Naive thymus-derived CD4-positive, alpha-beta T cell (primary cell): ENCODE measurements at regions of chr19 and their contacts with region 1.

Region 1: DNA sequence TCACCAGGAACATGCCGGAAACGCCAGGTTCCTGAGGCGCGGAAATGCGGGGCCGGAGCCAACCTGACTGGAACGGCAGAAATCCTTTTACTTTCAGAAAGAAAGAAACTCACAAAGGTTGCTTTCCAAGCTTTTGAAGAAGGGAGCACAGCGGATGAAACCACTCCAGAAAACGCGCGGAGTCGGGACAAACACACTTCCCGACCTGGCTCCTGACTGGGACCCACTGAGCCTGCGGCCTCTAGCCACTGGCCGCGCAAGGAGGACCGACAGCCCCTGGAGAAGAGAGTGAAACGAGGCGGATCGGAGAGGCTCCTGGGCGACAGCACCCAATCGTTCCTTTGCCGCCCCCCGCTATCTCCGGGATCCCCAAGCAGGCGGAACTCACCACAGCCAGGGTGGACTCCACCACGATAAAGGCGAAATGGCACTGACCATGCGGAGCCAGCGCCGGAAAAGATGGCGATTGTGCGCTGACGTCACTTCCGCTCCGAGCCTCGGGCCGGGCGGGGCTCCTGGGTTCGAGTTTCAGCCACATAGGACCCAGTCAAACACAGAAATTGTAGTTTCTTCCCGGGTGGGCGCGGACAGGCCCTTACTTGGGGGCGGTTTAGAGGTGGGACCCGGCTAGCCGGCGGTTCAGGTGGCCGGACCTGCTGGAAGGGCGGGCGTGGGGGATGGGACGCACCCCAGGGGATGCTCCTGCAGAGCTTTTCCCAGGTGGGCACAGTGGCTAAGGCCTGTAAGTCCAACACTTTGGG is at the start of gene ZNF121:
- DNase-seq: peak; percentile 61 to 82 (median 74)
- ATAC-seq: peak; percentile 87
- H3K4me3 ChIP-seq: peak within 1 kb of the TSS; percentile 98
- H3K4me3 Mint-ChIP-seq: peak within 1 kb of the TSS; percentile 91 to 99 (median 96)
- H3K27ac ChIP-seq: peak within 1 kb of the TSS; percentile 97
- H3K27ac Mint-ChIP-seq: peak within 1 kb of the TSS; percentile 94 to 99 (median 95)
- H3K4me1 ChIP-seq: peaks cover 7 to 15% of the 10 kb centered on the region in 2 donors
- H3K4me1 Mint-ChIP-seq: peaks cover 21 to 54% (median 34%) of the 10 kb centered on the region in 7 donors
- H3K27me3 ChIP-seq: no peaks in the 10 kb centered on the region
- H3K27me3 Mint-ChIP-seq: peaks cover 0 to 5% (median 4%) of the 10 kb centered on the region in 5 donors
- total RNA-seq, gene ZNF121: 28.3 to 49.4 (median 47.0) TPM

Region 2: GRCh38 chr19:9309139-9309973 is 274.9 kb before region 1 on chr19 and contains the start of gene ZNF699:
- CTCF ChIA-PET with region 1: interaction called, 3 read pairs
- POLR2A ChIA-PET with region 1: interaction called, 4 read pairs
- intact Hi-C with region 1: loop called (anchors 2 to 5 kb)
- DNase-seq: peak; percentile 94 to 100 (median 97)
- ATAC-seq: peak; percentile 94
- H3K4me3 ChIP-seq: peak within 1 kb of the TSS; percentile 95
- H3K4me3 Mint-ChIP-seq: peak within 1 kb of the TSS; percentile 89 to 98 (median 96)
- H3K27ac ChIP-seq: peak within 1 kb of the TSS; percentile 98
- H3K27ac Mint-ChIP-seq: peak within 1 kb of the TSS; percentile 89 to 99 (median 97)
- H3K4me1 ChIP-seq: peaks cover 6 to 15% of the 10 kb centered on the region in 2 donors
- H3K4me1 Mint-ChIP-seq: peaks cover 4 to 37% (median 24%) of the 10 kb centered on the region in 7 donors
- H3K27me3 ChIP-seq: no peaks in the 10 kb centered on the region
- H3K27me3 Mint-ChIP-seq: peaks cover 0 to 2% (median 0%) of the 10 kb centered on the region in 5 donors
- total RNA-seq, gene ZNF699: 9.1 to 19.1 (median 15.5) TPM

Region 3: DNA sequence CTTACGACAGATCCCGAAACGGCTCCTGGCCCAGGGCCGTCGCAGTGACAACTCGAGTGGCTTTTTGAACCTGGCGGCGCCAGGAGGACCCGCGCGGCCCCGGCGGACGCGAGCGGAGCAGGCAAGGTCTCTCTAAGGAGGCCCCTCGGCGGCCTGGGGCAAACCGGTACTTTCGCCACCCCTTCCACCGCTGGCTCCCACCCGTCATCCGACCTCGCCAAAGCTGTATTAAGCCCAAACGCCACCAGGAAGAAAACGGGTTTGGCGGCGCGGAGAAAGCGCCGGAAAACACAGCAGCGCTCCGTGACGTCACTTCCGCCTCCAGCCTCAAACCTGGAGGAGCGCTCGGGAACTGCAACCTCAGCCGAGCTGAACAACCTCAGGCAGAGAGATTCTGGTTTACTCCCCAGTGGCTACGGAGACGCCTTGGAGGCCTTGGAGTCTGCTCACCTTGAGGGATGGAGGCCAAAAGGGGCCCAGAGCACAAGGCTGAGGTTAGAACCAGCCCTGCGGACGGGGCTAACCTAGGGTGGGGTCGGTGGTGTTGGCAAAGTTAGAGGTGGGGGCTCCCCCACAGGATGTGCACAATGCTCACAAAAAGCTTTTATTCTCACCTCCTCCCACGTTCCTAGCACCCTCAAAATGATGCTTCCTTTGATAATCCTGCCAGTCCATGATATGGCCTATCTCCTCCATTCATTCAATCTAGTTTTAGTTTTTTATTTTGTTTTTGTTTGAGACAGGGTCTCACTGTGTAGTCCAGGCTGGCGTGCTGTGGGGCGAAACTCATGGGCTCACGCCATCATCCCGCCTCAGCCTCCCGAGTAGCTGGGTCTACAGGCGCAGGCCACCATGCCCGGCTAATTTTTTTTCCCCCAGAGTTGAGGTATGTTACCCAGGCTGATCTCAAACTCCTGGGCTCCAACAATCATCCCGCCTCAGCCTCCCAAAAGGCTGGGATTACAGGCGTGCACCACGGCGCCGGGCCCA is 148.7 kb before region 1 on chr19 and contains the start of gene ZNF266:
- CTCF ChIA-PET with region 1: interaction called, 4 read pairs
- POLR2A ChIA-PET with region 1: interaction called, 10 read pairs
- intact Hi-C with region 1: loop called (anchors 1 to 2 kb)
- DNase-seq: peak; percentile 82 to 93 (median 91)
- ATAC-seq: peak; percentile 92
- H3K4me3 ChIP-seq: peak within 1 kb of the TSS; percentile 73
- H3K4me3 Mint-ChIP-seq: peak within 1 kb of the TSS; percentile 89 to 97 (median 93)
- H3K27ac ChIP-seq: peak within 1 kb of the TSS; percentile 94
- H3K27ac Mint-ChIP-seq: peak within 1 kb of the TSS; percentile 95 to 99 (median 98)
- H3K4me1 ChIP-seq: peaks cover 26 to 27% of the 10 kb centered on the region in 2 donors
- H3K4me1 Mint-ChIP-seq: peaks cover 20 to 54% (median 48%) of the 10 kb centered on the region in 7 donors
- H3K27me3 ChIP-seq: no peaks in the 10 kb centered on the region
- H3K27me3 Mint-ChIP-seq: no peaks in the 10 kb centered on the region
- total RNA-seq, gene ZNF266: 34.0 to 73.9 (median 55.0) TPM

Region 4: DNA sequence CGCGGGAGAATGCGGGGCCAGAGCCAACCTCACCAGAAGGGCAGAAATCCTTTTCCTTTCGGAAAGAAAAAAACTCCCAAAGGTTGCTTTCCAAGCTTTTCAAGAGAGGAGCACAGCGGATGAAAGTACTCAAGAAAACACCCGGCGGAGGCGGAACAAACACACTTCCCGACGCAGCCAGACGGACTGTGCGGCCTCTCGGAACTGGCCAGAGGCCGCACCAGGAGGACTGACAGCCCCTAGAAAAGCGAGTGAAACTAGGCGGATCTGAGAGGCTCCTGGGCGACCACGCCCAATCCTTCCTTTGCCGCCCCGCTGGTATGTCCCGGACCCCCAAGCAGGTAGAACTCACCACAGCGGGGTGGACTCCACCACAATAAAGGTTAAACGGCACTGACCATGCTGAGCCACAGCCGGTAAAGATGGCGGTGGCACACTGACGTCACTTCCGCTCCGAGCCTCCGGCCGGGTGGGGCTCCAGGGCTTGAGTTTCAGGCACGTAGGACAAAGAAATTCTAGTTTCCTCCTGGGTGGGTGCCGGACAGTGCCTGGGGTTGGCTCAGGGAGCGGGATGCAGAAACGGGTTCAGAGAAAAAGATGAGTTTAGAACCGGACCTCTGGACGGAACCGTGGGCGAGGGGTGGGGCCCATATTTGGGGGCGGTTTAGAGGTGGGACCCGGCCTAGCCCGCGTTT is 90.6 kb after region 1 on chr19 and contains the start of gene ZNF562:
- CTCF ChIA-PET with region 1: no interaction called
- POLR2A ChIA-PET with region 1: no interaction called
- intact Hi-C with region 1: loop called in 1 of 2 experiments (anchors 1 kb)
- DNase-seq: peak; percentile 66 to 82 (median 76)
- ATAC-seq: peak; percentile 92
- H3K4me3 ChIP-seq: peak within 1 kb of the TSS; percentile 99
- H3K4me3 Mint-ChIP-seq: peak within 1 kb of the TSS; percentile 86 to 99 (median 96)
- H3K27ac ChIP-seq: peak within 1 kb of the TSS; percentile 91
- H3K27ac Mint-ChIP-seq: peak within 1 kb of the TSS; percentile 87 to 99 (median 96)
- H3K4me1 ChIP-seq: peaks cover 0 to 4% of the 10 kb centered on the region in 2 donors
- H3K4me1 Mint-ChIP-seq: peaks cover 11 to 33% (median 29%) of the 10 kb centered on the region in 7 donors
- H3K27me3 ChIP-seq: no peaks in the 10 kb centered on the region
- H3K27me3 Mint-ChIP-seq: no peaks in the 10 kb centered on the region
- total RNA-seq, gene ZNF562: 8.9 to 18.6 (median 16.5) TPM

Region 5: DNA sequence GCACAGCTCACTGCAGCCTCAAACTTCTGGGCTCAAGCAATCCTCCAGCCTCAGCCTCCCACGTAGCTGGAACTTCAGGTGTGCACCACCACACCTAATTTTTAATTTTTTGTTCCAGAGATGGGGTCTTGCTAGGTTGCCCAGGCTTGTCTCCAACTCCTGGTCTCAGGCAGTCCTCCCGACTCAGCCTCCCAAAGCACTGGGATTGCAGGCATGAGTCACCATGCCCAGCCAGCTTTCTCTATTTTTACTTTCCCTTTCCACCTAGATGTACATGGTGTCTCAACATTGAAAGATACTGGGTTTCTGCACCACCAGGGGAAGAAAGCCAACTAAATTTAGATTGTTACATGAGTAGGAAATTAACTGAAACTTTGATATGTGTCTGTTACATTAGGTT is 198.1 kb after region 1 on chr19:
- CTCF ChIA-PET with region 1: no interaction called
- POLR2A ChIA-PET with region 1: no interaction called
- intact Hi-C with region 1: no loop called
- DNase-seq: no peak
- ATAC-seq: no peak
- H3K4me3 ChIP-seq: no peak overlapping the region
- H3K4me3 Mint-ChIP-seq: no peak overlapping the region
- H3K27ac ChIP-seq: no peak overlapping the region
- H3K27ac Mint-ChIP-seq: no peak overlapping the region
- H3K4me1 ChIP-seq: peaks cover 5 to 9% of the 10 kb centered on the region in 2 donors
- H3K4me1 Mint-ChIP-seq: peaks cover 10 to 25% (median 20%) of the 10 kb centered on the region in 7 donors
- H3K27me3 ChIP-seq: no peaks in the 10 kb centered on the region
- H3K27me3 Mint-ChIP-seq: no peaks in the 10 kb centered on the region

Region 6: DNA sequence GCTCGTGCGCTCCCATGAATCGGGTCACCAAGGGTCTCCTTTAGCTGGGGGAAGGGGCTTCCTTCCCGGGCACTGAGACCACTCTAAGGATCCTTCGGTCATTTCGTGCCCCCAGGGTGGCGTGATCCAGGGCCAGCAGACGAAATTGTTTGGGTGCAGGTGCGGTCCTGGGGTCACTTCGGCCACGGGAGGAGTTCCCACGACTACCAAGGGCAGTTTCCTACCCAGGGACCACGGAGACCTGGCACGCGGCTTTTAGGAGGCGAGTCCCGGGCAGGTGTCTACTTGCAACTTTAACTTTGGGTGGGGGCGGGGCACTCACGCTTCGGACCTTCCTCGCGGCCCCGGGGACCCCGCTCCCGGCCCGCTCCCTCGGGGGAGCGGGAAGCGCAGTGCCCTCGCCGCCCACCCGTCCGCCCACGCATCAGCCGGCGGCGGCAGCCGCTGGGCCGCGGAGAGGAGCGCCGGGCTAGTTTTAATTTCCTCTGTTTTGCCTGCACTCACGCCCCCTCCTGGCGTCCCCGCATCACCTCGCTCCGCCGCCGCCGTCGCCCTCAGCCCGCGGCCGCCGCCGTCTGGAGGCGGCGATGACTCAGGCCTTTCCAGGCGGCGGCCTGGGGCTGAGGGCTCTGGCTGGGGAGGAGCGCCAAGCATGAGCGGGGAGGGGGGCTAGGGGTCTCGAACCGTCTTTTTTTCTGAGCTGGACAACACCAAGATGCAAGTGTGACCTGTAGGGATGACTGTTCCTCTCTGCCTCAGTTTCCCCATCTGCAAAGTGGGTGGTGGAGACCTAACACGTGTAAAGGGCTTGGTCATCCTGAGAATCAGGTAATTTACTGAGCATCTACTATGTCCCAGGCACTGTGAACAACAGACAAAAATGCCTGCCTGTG is 330.3 kb after region 1 on chr19:
- CTCF ChIA-PET with region 1: no interaction called
- POLR2A ChIA-PET with region 1: no interaction called
- intact Hi-C with region 1: loop called in 1 of 2 experiments (anchors 1 kb)
- DNase-seq: peak; percentile 59 to 83 (median 72)
- ATAC-seq: peak; percentile 95
- H3K4me3 ChIP-seq: peak overlapping the region; percentile 64
- H3K4me3 Mint-ChIP-seq: peak overlapping the region; percentile 66 to 86 (median 72)
- H3K27ac ChIP-seq: no peak overlapping the region
- H3K27ac Mint-ChIP-seq: no peak overlapping the region
- H3K4me1 ChIP-seq: peaks cover 3 to 5% of the 10 kb centered on the region in 2 donors
- H3K4me1 Mint-ChIP-seq: peaks cover 6 to 12% (median 9%) of the 10 kb centered on the region in 7 donors
- H3K27me3 ChIP-seq: peaks cover 0 to 13% of the 10 kb centered on the region in 2 donors
- H3K27me3 Mint-ChIP-seq: peaks cover 22 to 33% (median 27%) of the 10 kb centered on the region in 5 donors